ENCODE measurements at regions of chr12 and their contacts with region 1.

Region 1: DNA sequence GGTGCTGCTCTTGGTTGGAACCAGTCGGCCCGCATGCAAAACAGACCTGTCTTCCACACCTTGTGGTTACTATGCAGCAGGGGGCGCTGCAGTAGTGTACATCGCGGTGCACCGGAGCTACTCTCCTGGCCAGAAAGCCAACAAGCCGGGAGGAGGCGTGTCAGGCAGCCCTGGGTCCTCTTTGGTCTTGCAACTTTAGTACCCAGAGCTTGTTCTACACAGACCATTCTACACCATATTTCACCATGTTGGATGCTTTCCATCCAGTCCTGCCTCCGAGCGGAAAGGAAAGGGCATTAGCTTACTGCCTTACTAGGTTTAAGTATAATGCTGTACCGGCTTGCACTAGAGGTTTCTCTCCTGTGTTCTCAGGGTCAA is 927 bp upstream of the TMTC2 start:
- DNase-seq: peak; percentile 67 to 92 (median 85)
- ATAC-seq: peak; percentile 59 to 63 (median 60)
- H3K4me3 ChIP-seq: peak overlapping the region; percentile 69 to 75
- H3K4me3 Mint-ChIP-seq: peak overlapping the region; percentile 90 to 98 (median 94)
- H3K27ac ChIP-seq: peak overlapping the region; percentile 84
- H3K27ac Mint-ChIP-seq: peak overlapping the region; percentile 93
- H3K4me1 ChIP-seq: peaks cover 10 to 14% of the 10 kb centered on the region in 2 experiments
- H3K4me1 Mint-ChIP-seq: peaks cover 16 to 26% (median 19%) of the 10 kb centered on the region in 3 donors
- H3K27me3 ChIP-seq: peaks cover 0 to 3% of the 10 kb centered on the region in 2 experiments
- H3K27me3 Mint-ChIP-seq: peaks cover 9 to 15% of the 10 kb centered on the region in 2 donors

Region 2: GRCh38 chr12:82438356-82438755 is 247.4 kb before region 1 on chr12:
- CTCF ChIA-PET with region 1: no interaction called
- POLR2A ChIA-PET with region 1: interaction called in 1 of 2 experiments, 11 read pairs
- DNase-seq: no peak
- ATAC-seq: no peak
- H3K4me3 ChIP-seq: no peak overlapping the region
- H3K4me3 Mint-ChIP-seq: no peak overlapping the region
- H3K27ac ChIP-seq: no peak overlapping the region
- H3K27ac Mint-ChIP-seq: no peak overlapping the region
- H3K4me1 ChIP-seq: no peaks in the 10 kb centered on the region
- H3K4me1 Mint-ChIP-seq: no peaks in the 10 kb centered on the region
- H3K27me3 ChIP-seq: no peaks in the 10 kb centered on the region
- H3K27me3 Mint-ChIP-seq: no peaks in the 10 kb centered on the region

Region 3: GRCh38 chr12:83823431-83823963 is 1137.7 kb after region 1 on chr12:
- CTCF ChIA-PET with region 1: interaction called in 1 of 2 experiments, 14 read pairs
- POLR2A ChIA-PET with region 1: no interaction called
- DNase-seq: peak in 6 of 35 experiments; percentile 2 to 12 (median 4)
- ATAC-seq: peak in 1 of 4 experiments; percentile 20
- H3K4me3 ChIP-seq: no peak overlapping the region
- H3K4me3 Mint-ChIP-seq: no peak overlapping the region
- H3K27ac ChIP-seq: no peak overlapping the region
- H3K27ac Mint-ChIP-seq: no peak overlapping the region
- H3K4me1 ChIP-seq: no peaks in the 10 kb centered on the region
- H3K4me1 Mint-ChIP-seq: no peaks in the 10 kb centered on the region
- H3K27me3 ChIP-seq: no peaks in the 10 kb centered on the region
- H3K27me3 Mint-ChIP-seq: no peaks in the 10 kb centered on the region

Measured in T-cell (primary cell).